Activated CD4-positive, alpha-beta T cell treated with anti-CD3 and anti-CD28 coated beads, Interleukin-2, amount 10 ng/mL, durations not matched to agents 24 days and 14 days (primary cell): ENCODE measurements at regions of chr12 and their contacts with region 1.

Region 1: DNA sequence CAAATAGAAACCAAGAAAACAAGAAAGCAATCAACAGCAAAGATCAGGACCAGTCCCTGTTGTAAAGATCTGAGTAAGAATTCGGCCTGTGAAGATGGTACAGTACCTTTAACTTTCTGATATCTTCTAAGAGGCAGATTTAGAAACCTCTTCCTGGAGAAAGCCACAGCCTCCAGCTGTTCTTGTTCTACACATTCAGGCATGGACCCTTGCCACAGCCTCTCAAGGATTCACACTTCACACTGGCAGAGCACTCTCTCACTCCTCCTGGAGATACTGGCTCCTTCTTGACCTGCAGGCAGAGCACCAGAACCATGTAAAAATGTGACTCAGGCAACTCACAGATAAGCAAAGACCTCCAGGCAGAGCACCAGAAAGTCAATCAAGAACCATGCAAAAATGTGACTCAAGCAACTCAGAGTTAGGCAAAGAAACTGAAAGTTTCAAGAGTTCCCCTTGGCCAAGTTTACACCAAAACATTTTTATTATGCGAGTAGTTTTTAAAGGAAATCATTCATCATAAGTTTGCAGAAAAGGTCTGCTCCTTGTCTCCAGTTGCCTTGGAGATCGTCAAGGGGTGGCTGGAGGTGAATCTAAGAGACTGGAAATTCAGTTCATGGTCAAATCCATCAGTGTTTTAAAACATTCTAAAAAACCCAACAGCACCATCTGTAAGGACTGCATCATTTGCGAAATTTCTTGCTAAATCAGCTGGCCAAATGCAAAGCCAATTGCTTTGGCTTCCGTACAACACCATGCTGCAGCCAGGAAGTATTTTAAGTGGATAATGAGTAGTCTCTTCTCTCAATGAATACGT is 119.3 kb upstream of the MDM1 start:
- DNase-seq: peak; percentile 87
- H3K4me3 Mint-ChIP-seq: peak overlapping the region; percentile 52
- H3K27ac Mint-ChIP-seq: peak overlapping the region; percentile 98
- H3K4me1 Mint-ChIP-seq: peaks cover 81% of the 10 kb centered on the region
- H3K27me3 Mint-ChIP-seq: no peaks in the 10 kb centered on the region

Region 2: DNA sequence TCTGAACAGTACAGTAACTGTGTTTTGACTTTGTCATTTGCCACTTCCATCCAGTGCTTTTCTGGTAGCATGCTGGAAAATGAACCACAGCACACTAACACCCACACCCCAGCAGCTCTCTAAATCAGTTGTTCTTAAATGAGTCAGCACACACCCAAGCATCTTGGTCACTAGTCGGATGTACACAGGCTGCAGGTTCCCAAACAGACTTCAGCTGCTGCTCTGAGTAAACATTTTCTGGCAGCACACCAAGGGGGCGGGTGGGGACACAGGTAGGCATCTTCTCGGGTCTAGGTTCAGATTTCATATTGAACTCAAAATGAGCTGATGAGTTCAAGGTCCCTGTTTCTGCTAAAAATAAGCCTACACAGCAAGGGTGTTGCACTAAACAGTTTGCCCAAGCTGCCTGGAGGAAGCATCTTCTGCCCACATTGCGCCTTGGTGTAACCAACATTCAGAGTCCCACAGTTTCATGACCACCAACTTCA is 331.7 kb before region 1 on chr12:
- intact Hi-C with region 1: loop called (anchors 1 kb)
- DNase-seq: peak; percentile 88
- H3K4me3 Mint-ChIP-seq: peak overlapping the region; percentile 39
- H3K27ac Mint-ChIP-seq: no peak overlapping the region
- H3K4me1 Mint-ChIP-seq: peaks cover 35% of the 10 kb centered on the region
- H3K27me3 Mint-ChIP-seq: no peaks in the 10 kb centered on the region

Region 3: GRCh38 chr12:68406134-68406594 is 45.3 kb before region 1 on chr12:
- intact Hi-C with region 1: loop called (anchors 5 kb)
- DNase-seq: no peak
- H3K4me3 Mint-ChIP-seq: no peak overlapping the region
- H3K27ac Mint-ChIP-seq: peak overlapping the region; percentile 39
- H3K4me1 Mint-ChIP-seq: peaks cover 25% of the 10 kb centered on the region
- H3K27me3 Mint-ChIP-seq: peaks cover 12% of the 10 kb centered on the region

Region 4: GRCh38 chr12:68497702-68498101 is 46.2 kb after region 1 on chr12:
- intact Hi-C with region 1: loop called (anchors 1 kb)
- DNase-seq: peak; percentile 69
- H3K4me3 Mint-ChIP-seq: peak overlapping the region; percentile 66
- H3K27ac Mint-ChIP-seq: peak overlapping the region; percentile 89
- H3K4me1 Mint-ChIP-seq: peaks cover 34% of the 10 kb centered on the region
- H3K27me3 Mint-ChIP-seq: no peaks in the 10 kb centered on the region

Region 5: GRCh38 chr12:68587448-68587873 is 136.0 kb after region 1 on chr12:
- intact Hi-C with region 1: loop called (anchors 1 kb)
- DNase-seq: peak; percentile 84
- H3K4me3 Mint-ChIP-seq: peak overlapping the region; percentile 16
- H3K27ac Mint-ChIP-seq: peak overlapping the region; percentile 74
- H3K4me1 Mint-ChIP-seq: peaks cover 36% of the 10 kb centered on the region
- H3K27me3 Mint-ChIP-seq: no peaks in the 10 kb centered on the region

Region 6: GRCh38 chr12:68686595-68687521 is 235.4 kb after region 1 on chr12 and contains the start of gene NUP107:
- intact Hi-C with region 1: loop called (anchors 5 kb)
- DNase-seq: peak; percentile 99
- H3K4me3 Mint-ChIP-seq: peak within 1 kb of the TSS; percentile 95
- H3K27ac Mint-ChIP-seq: peak within 1 kb of the TSS; percentile 92
- H3K4me1 Mint-ChIP-seq: peaks cover 33% of the 10 kb centered on the region
- H3K27me3 Mint-ChIP-seq: no peaks in the 10 kb centered on the region
- total RNA-seq, gene NUP107: 127 and 128 TPM in 2 replicates